ENCODE measurements at regions of chr2 and their contacts with region 1.

Region 1: GRCh38 chr2:85354286-85355072 is at the starts of genes ELMOD3 and RETSAT:
- DNase-seq: peak; percentile 98 to 100
- ATAC-seq: peak; percentile 94 to 99
- H3K4me3 ChIP-seq: peak within 1 kb of the TSS; percentile 83
- H3K27ac ChIP-seq: peak within 1 kb of the TSS; percentile 85 to 91
- H3K4me1 ChIP-seq: peaks cover 15% of the 10 kb centered on the region
- CTCF ChIP-seq: no peak
- EP300 ChIP-seq: no peak
- POLR2A ChIP-seq: peak; percentile 99
- RAD21 ChIP-seq: no peak
- polyA plus RNA-seq, gene ELMOD3: 29.9 and 31.9 TPM in 2 replicates
- polyA plus RNA-seq, gene RETSAT: 51.6 and 52.3 TPM in 2 replicates

Region 2: DNA sequence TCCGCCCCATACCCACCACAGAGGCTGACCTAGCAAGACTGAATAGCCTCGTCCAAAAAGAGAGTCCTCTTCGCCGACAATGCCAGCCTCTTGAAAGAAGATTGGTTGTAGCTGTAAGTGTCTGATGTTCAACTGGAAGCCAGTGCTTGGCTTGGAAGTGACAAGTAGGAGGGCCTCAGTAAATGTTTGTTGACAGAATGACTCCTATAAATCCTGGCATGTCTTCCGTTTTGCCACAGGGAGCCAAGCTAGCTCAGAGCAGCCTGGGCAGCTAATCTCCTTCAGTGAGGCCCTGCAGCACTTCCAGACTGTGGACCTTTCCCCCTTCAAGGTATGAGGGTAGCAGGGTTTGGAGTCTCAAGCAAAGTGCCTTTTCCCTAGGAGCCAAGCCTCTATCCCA is 15.0 kb after region 1 on chr2:
- CTCF ChIA-PET with region 1: interaction called, 16 read pairs
- POLR2A ChIA-PET with region 1: interaction called, 12 read pairs
- DNase-seq: peak in 1 of 2 experiments; percentile 30
- ATAC-seq: peak; percentile 64 to 72; a peak in 5 of 6 replicates
- H3K4me3 ChIP-seq: no peak overlapping the region
- H3K27ac ChIP-seq: peak overlapping the region in 1 of 2 experiments; percentile 11; a peak in 1 of 6 replicates
- H3K4me1 ChIP-seq: peaks cover 9% of the 10 kb centered on the region; the same call in 2 of the 3 replicates
- CTCF ChIP-seq: no peak
- EP300 ChIP-seq: no peak
- POLR2A ChIP-seq: no peak
- RAD21 ChIP-seq: no peak